PC-3 (cell line): ENCODE measurements at regions of chr15 and their contacts with region 1.

Region 1: GRCh38 chr15:31435261-31435911 is 108.8 kb downstream of the KLF13 start:
- DNase-seq: peak; percentile 65
- ATAC-seq: peak; percentile 83
- H3K4me3 ChIP-seq: peak overlapping the region; percentile 21; the same call in 1 of the 2 replicates
- H3K27ac ChIP-seq: no peak overlapping the region
- H3K4me1 ChIP-seq: peaks cover 15% of the 10 kb centered on the region
- H3K27me3 ChIP-seq: no peaks in the 10 kb centered on the region
- CTCF ChIP-seq: peak; percentile 85

Region 2: GRCh38 chr15:31215490-31216214 is 219.7 kb before region 1 on chr15:
- CTCF ChIA-PET with region 1: no interaction called
- POLR2A ChIA-PET with region 1: no interaction called
- intact Hi-C with region 1: loop called (anchors 5 kb)
- DNase-seq: peak; percentile 62
- ATAC-seq: peak; percentile 79
- H3K4me3 ChIP-seq: peak overlapping the region; percentile 67
- H3K27ac ChIP-seq: no peak overlapping the region
- H3K4me1 ChIP-seq: peaks cover 11% of the 10 kb centered on the region; the same call in 1 of the 2 replicates
- H3K27me3 ChIP-seq: no peaks in the 10 kb centered on the region
- CTCF ChIP-seq: peak; percentile 75

Region 3: DNA sequence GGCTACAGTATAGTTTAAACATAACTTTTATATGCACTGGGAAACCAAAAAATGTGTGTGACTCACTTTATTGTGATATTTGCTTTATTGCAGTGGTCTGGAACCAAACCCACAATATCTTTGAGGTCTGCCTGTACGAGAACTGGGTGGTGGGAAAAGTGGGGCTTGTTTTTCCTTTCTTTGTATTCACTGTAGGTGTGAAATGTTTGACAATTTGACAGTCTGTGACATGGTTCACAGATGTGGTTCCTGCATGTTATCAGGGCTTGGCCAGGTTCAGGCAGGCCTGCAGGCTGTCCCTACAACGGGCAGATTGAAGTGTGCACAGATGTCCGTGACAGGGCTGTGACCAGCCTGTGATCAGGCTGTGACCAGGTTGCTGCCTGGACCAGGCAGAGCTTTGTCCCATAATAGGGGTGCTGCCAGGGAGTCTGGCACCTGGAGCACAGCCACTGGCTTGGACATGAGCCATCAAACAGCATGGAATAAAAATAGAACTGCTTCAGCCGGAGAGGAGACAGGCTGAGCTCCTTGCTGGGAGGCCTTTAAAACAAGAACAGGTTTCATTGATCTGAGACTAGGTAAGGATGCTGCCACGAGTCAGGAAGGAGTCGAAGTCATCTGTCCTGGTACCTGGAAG is 47.8 kb before region 1 on chr15:
- CTCF ChIA-PET with region 1: interaction called, 3 read pairs
- POLR2A ChIA-PET with region 1: no interaction called
- intact Hi-C with region 1: loop called (anchors 5 kb)
- DNase-seq: peak; percentile 70
- ATAC-seq: peak; percentile 74
- H3K4me3 ChIP-seq: no peak overlapping the region
- H3K27ac ChIP-seq: peak overlapping the region; percentile 64
- H3K4me1 ChIP-seq: peaks cover 24% of the 10 kb centered on the region
- H3K27me3 ChIP-seq: peaks cover 3% of the 10 kb centered on the region; the same call in 1 of the 2 replicates
- CTCF ChIP-seq: no peak

Region 4: DNA sequence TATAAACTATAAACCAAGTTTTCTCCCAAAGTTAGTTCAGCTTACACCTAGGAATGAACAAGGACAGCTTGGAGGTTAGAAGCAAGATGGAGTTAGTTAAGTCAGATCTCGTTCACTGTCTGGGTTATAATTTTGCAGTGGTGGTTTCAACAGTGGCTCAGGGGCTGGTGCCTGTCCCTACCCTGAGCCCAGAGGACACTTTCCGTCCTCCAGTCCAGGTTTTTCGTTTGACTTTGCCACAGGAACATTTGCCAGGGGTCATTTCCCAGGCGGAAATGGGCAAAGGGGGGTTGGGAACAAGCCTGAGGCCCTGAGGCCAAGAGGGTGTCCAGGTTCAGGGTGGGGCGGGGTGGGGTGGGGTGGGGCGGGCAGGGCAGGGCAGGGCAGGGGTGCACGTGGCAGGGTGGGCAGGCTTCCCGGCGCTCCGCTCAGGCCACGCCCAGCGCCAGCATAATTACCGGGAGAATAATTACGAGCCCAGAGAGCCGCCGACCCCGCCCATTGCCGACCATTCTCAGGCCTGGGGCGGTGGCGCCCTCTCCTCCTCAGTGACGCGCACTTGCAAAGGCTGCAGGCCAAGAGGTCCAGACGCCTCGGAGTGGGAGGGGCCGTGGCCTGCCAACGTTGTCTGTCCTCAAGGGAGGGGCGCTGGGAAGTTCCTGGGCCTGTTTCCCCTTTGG is 38.4 kb before region 1 on chr15:
- CTCF ChIA-PET with region 1: no interaction called
- POLR2A ChIA-PET with region 1: no interaction called
- intact Hi-C with region 1: loop called (anchors 2 kb)
- DNase-seq: peak; percentile 70
- ATAC-seq: peak; percentile 82
- H3K4me3 ChIP-seq: peak overlapping the region; percentile 51; the same call in 1 of the 2 replicates
- H3K27ac ChIP-seq: peak overlapping the region; percentile 36; the same call in 1 of the 2 replicates
- H3K4me1 ChIP-seq: peaks cover 21% of the 10 kb centered on the region; the same call in 1 of the 2 replicates
- H3K27me3 ChIP-seq: 0 out of 2 replicates have a peak, but pooled peaks cover 2% of the 10 kb centered on the region
- CTCF ChIP-seq: no peak

Region 5: GRCh38 chr15:31458591-31459399 is 23.4 kb after region 1 on chr15:
- CTCF ChIA-PET with region 1: interaction called, 12 read pairs
- POLR2A ChIA-PET with region 1: no interaction called
- intact Hi-C with region 1: no loop called
- DNase-seq: no peak
- ATAC-seq: no peak
- H3K4me3 ChIP-seq: no peak overlapping the region
- H3K27ac ChIP-seq: no peak overlapping the region
- H3K4me1 ChIP-seq: peaks cover 11% of the 10 kb centered on the region
- H3K27me3 ChIP-seq: no peaks in the 10 kb centered on the region
- CTCF ChIP-seq: no peak